Activated CD4-positive, alpha-beta memory T cell treated with anti-CD3 and anti-CD28 coated beads for 36 hours (primary cell): ENCODE measurements at regions of chr3 and their contacts with region 1.

Region 1: GRCh38 chr3:112489674-112490479 is 9.4 kb downstream of the BTLA start:
- DNase-seq: no peak
- H3K4me3 Mint-ChIP-seq: peak overlapping the region; percentile 47
- H3K27ac Mint-ChIP-seq: peak overlapping the region; percentile 68
- H3K4me1 Mint-ChIP-seq: peaks cover 64% of the 10 kb centered on the region
- H3K27me3 Mint-ChIP-seq: no peaks in the 10 kb centered on the region

Region 2: GRCh38 chr3:111604119-111604518 is 885.8 kb before region 1 on chr3:
- CTCF ChIA-PET with region 1: no interaction called
- POLR2A ChIA-PET with region 1: no interaction called
- intact Hi-C with region 1: loop called (anchors 5 kb)
- DNase-seq: peak; percentile 71
- H3K4me3 Mint-ChIP-seq: peak overlapping the region; percentile 62
- H3K27ac Mint-ChIP-seq: peak overlapping the region; percentile 92
- H3K4me1 Mint-ChIP-seq: peaks cover 87% of the 10 kb centered on the region
- H3K27me3 Mint-ChIP-seq: no peaks in the 10 kb centered on the region

Region 3: DNA sequence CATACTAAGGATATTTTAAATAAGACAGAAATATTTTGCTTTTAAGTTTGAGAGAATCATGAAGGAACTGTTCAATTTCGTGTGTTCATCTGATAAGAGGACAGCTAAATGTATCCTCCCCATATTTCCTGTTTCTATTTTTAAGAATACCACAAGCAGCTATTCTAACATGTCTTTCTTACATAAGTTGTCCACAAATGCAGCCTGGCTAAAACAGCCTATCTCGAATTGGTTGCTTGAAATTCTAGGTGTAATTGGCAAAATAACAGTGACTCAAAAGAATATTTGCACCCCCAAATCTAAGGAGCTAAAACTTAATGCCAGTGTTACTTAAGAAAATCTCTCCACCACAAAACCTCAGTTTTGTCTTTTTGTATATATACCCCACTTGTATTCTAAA is 25.6 kb before region 1 on chr3:
- CTCF ChIA-PET with region 1: interaction called, 3 read pairs
- POLR2A ChIA-PET with region 1: no interaction called
- intact Hi-C with region 1: loop called (anchors 1 kb)
- DNase-seq: no peak
- H3K4me3 Mint-ChIP-seq: no peak overlapping the region
- H3K27ac Mint-ChIP-seq: peak overlapping the region; percentile 31
- H3K4me1 Mint-ChIP-seq: peaks cover 84% of the 10 kb centered on the region
- H3K27me3 Mint-ChIP-seq: no peaks in the 10 kb centered on the region

Region 4: DNA sequence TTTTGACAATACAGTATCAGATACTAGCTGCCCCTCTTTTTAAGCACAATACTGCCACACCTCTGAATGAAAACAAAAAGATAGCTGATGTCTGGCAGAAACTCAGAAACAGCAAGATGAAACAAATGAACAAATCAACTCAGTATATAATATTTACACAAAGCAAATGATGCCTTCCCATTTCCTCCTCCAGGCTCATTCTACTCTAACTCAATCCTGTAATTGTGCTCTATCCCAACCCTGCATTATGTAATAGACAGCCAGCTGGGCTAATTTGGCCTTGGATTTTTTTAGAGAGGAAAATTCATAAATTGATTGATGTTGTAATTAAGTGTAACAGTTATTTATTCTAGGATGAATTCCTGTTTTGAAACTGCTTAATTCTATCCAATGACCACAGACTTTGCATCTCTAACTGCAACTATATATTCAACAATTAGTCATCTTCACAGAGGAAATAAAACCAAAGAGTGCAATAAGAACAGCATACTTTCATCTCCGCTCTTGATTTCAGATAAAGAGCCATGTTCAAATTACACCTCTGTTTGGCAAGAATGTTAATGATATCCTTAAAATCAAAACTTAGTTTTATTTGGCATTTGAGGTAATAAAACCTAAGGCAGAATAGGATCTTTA is 65.8 kb after region 1 on chr3:
- CTCF ChIA-PET with region 1: no interaction called
- POLR2A ChIA-PET with region 1: no interaction called
- intact Hi-C with region 1: no loop called
- DNase-seq: no peak
- H3K4me3 Mint-ChIP-seq: no peak overlapping the region
- H3K27ac Mint-ChIP-seq: no peak overlapping the region
- H3K4me1 Mint-ChIP-seq: peaks cover 48% of the 10 kb centered on the region
- H3K27me3 Mint-ChIP-seq: no peaks in the 10 kb centered on the region